Ascending aorta (tissue), 2 donors: ENCODE measurements at regions of chr1 and their contacts with region 1.

Region 1: DNA sequence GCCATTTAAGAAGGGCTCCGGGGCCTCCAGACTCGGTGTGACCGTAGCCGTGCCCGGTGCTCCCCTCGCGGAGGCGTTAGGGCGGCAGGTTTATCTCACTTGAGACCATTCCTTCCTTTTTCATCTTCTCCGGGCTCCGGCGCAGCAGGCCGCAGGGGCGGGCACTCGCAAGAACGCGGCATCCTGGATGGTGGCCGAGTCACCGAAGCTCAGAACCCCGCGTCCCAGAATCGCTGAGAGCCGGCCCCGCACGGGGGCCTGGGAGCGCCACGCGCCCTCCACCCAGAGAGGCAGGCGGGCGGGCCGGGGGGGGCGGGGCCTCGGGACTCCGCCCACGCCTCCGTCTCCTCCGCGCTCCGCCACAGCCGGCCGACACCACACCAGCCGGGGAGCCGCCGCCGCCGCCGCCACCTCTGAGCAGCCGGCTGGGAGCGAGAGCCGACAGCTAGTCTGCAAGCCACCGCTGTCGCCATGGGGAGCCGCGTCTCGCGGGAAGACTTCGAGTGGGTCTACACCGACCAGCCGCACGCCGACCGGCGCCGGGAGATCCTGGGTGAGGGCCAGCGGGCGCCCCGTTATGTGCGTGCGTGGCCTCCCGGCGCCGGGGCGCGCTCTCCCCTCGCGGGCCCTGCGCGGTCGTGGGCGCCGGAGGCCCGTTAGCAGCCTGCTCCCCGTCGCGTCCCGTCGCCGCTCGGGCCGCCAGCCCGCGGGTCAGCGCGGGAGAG is at the start of gene DEGS1:
- DNase-seq: peak; percentile 42 to 92
- H3K4me3 ChIP-seq: peak within 1 kb of the TSS; percentile 77 to 96
- H3K27ac ChIP-seq: peak within 1 kb of the TSS; percentile 92 to 96
- H3K4me1 ChIP-seq: peaks cover 4 to 23% of the 10 kb centered on the region in 2 donors
- H3K27me3 ChIP-seq: no peaks in the 10 kb centered on the region
- CTCF ChIP-seq: no peak
- total RNA-seq, gene DEGS1: 68.1 TPM

Region 2: DNA sequence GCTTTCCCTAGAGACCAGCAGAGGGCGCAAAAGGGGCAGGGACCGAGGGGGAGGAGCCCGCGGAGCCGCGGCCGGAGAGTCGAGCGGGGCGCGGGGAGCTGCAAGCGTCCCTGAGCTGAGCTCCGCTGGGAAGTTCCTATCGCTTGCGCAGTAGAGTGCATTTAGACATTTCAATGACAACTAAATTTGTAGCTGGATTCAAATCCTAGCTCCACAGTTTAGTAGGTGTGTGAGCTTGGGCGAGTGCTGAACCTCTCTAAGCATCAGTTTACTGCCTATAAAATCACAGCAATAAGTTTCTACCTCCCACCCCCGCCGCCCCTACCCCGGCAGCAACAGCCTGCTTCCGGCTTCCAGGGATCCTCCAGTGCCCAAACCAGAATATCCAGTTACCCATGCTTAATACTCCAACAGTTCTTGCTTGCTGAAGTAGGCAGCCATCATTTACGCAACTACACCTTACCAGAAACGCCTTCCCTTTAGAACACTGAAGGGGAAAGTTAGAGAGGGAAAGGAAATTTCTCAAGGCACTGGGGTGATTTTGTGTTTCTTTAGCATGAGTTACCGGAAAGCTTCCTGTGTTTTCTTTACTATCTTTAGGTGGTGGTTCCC is 1049.1 kb before region 1 on chr1:
- intact Hi-C with region 1: loop called (anchors 5 kb)
- DNase-seq: peak in 1 of 2 donors; percentile 92
- H3K4me3 ChIP-seq: peak overlapping the region; percentile 48 to 56
- H3K27ac ChIP-seq: peak overlapping the region; percentile 60 to 64
- H3K4me1 ChIP-seq: peaks cover 7 to 12% of the 10 kb centered on the region in 2 donors
- H3K27me3 ChIP-seq: no peaks in the 10 kb centered on the region
- CTCF ChIP-seq: peak; percentile 84 to 97 (median 97)

Region 3: GRCh38 chr1:223887747-223888418 is 295.1 kb before region 1 on chr1:
- intact Hi-C with region 1: loop called (anchors 2 kb)
- DNase-seq: peak; percentile 45 to 93
- H3K4me3 ChIP-seq: peak overlapping the region in 1 of 2 donors; percentile 33
- H3K27ac ChIP-seq: peak overlapping the region; percentile 69 to 70
- H3K4me1 ChIP-seq: peaks cover 0 to 8% of the 10 kb centered on the region in 2 donors
- H3K27me3 ChIP-seq: no peaks in the 10 kb centered on the region
- CTCF ChIP-seq: no peak

Region 4: DNA sequence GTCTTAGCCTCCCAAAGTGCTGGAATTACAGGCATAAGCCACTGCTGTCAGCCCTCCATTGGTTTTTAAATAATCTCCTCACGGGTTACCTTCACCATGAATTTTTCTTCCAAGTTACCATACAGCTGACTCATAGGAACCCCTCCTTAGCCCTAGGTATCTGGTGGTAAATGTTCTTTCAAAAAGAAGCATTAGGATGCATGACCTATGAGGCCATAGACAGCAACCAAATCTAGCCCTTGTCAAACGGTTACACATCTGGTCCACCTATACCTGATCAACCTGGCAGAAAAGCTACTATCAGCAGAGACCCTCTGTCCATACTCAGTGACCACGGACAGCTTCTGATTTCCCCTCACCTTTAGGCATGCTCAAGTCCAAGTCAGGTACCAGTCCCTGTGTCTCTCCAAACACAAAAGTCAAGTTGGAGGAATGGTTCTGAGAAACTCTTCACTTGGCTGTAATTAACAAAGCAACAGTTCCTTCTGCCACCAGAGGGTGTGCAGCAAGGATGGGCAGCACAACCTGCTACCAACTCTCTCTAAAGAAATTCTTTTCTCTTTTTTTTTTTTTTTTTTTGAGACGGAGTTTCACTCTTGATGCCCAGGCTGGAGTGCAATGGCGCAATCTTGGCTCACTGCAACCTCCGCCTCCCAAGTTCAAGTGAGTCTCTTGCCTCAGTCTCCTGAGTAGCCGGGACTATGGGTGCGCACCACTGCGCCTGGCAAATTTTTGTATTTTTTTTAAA is 12.5 kb before region 1 on chr1:
- intact Hi-C with region 1: loop called (anchors 1 kb)
- DNase-seq: no peak
- H3K4me3 ChIP-seq: no peak overlapping the region
- H3K27ac ChIP-seq: no peak overlapping the region
- H3K4me1 ChIP-seq: peaks cover 6 to 12% of the 10 kb centered on the region in 2 donors
- H3K27me3 ChIP-seq: no peaks in the 10 kb centered on the region
- CTCF ChIP-seq: peak in 2 of 3 experiments; percentile 12 to 19

Region 5: GRCh38 chr1:224434691-224435317 is 251.8 kb after region 1 on chr1 and contains the start of gene WDR26:
- intact Hi-C with region 1: loop called (anchors 10 kb)
- DNase-seq: peak; percentile 44 to 91
- H3K4me3 ChIP-seq: peak within 1 kb of the TSS; percentile 73 to 76
- H3K27ac ChIP-seq: peak within 1 kb of the TSS; percentile 99 to 100
- H3K4me1 ChIP-seq: peaks cover 0 to 27% of the 10 kb centered on the region in 2 donors
- H3K27me3 ChIP-seq: no peaks in the 10 kb centered on the region
- CTCF ChIP-seq: no peak
- total RNA-seq, gene WDR26: 31.8 TPM